ENCODE measurements at regions of chr11 and their contacts with region 1.

Region 1: GRCh38 chr11:71269603-71270511 is 17.5 kb upstream of the SHANK2 start:
- DNase-seq: no peak
- ATAC-seq: no peak
- H3K4me3 ChIP-seq: no peak overlapping the region
- H3K27ac ChIP-seq: no peak overlapping the region
- H3K4me1 ChIP-seq: no peaks in the 10 kb centered on the region
- H3K27me3 ChIP-seq: no peaks in the 10 kb centered on the region

Region 2: GRCh38 chr11:71322192-71322735 is 52.4 kb after region 1 on chr11:
- intact Hi-C with region 1: no loop called
- DNase-seq: peak; percentile 9 to 44
- ATAC-seq: no peak
- H3K4me3 ChIP-seq: no peak overlapping the region
- H3K27ac ChIP-seq: no peak overlapping the region
- H3K4me1 ChIP-seq: no peaks in the 10 kb centered on the region
- H3K27me3 ChIP-seq: no peaks in the 10 kb centered on the region

Region 3: DNA sequence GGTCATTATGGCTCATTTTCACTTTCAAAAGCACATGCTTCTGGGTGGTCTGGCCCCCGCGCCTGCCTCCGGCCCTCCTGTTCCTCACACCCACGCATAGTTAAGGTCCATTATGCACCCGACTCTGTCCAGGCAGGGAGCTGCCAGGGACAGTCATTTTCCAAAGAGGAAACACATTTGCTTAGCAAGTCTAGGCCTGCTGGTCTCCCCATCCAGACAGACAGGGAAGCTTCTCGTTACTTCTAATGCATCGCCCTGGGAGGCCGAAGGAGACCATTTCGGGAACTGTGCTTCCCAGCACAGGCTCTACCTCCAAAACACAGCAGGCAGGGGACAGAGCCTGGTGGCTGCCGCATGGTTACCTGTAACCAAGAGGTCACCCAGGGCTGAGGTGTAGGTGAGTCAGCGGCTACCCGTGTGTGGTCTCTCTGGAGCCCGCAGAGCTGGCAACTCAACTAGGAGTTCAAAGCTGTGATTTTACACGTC is 69.6 kb after region 1 on chr11:
- intact Hi-C with region 1: loop called in 1 of 2 experiments (anchors 10 kb)
- DNase-seq: peak in 1 of 2 donors; percentile 48
- ATAC-seq: peak; percentile 8
- H3K4me3 ChIP-seq: no peak overlapping the region
- H3K27ac ChIP-seq: no peak overlapping the region
- H3K4me1 ChIP-seq: no peaks in the 10 kb centered on the region
- H3K27me3 ChIP-seq: no peaks in the 10 kb centered on the region

Measured in aorta (tissue), 5 donors.